ENCODE measurements at regions of chr7 and their contacts with region 1.

Region 1: GRCh38 chr7:44573464-44574286 is at the start of gene DDX56:
- DNase-seq: peak; percentile 83 to 97 (median 90)
- ATAC-seq: peak; percentile 96
- H3K4me3 ChIP-seq: peak within 1 kb of the TSS; percentile 71
- H3K4me3 Mint-ChIP-seq: peak within 1 kb of the TSS; percentile 95
- H3K27ac ChIP-seq: peak within 1 kb of the TSS; percentile 77 to 82
- H3K27ac Mint-ChIP-seq: peak within 1 kb of the TSS; percentile 99
- H3K4me1 ChIP-seq: peaks cover 35% of the 10 kb centered on the region
- H3K4me1 Mint-ChIP-seq: peaks cover 48% of the 10 kb centered on the region
- H3K27me3 ChIP-seq: no peaks in the 10 kb centered on the region
- H3K27me3 Mint-ChIP-seq: no peaks in the 10 kb centered on the region
- CTCF ChIP-seq: no peak
- total RNA-seq, gene DDX56: 126 to 127 TPM

Region 2: DNA sequence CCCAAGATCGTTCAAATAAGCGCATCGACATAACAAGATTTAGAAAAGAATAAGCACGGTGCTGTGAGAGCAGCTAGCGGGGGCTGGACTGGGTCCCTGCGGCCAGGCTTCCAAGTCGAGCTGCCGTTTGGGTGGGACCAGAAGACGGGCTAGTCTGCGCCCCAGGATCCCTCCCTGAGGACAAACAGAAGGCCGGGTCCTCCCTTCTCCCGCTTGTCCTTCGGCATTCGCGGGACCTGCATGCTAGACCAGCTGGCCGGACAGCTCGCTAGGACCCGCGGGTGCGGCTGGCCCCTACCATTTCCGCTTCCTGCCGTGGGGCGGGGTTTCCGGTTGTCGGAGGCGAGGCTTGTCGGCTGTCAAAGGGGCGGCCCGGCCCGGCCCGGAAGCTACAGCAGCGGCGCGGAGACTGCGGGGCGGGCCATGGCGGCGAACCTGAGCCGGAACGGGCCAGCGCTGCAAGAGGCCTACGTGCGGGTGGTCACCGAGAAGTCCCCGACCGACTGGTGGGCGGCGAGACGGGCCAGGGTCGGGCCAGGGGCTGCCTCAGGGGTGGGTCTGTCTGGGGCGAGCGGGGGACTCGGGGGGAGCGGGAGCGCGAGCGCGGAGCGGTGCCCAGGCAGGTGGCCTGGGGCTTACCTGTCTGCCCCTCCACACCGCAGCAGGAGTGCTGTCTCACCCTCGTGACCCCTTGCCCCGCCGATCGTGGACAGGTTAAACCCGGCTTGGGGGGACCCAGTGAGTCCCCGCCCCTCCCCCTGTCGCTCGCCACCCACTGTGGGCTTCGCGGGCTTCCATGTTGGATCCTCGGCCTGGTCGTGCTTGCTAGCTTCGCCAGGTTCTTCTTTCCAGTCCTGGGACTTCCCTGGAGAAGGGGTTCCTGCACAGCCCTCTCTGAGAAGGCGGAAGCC is 529.1 kb before region 1 on chr7 and contains the start of gene DBNL:
- CTCF ChIA-PET with region 1: interaction called, 3 read pairs
- POLR2A ChIA-PET with region 1: interaction called, 5 read pairs
- intact Hi-C with region 1: loop called in 1 of 2 experiments (anchors 10 kb)
- DNase-seq: peak; percentile 75 to 92 (median 88)
- ATAC-seq: peak; percentile 54
- H3K4me3 ChIP-seq: peak within 1 kb of the TSS; percentile 99
- H3K4me3 Mint-ChIP-seq: peak within 1 kb of the TSS; percentile 87
- H3K27ac ChIP-seq: peak within 1 kb of the TSS; percentile 89
- H3K27ac Mint-ChIP-seq: peak within 1 kb of the TSS; percentile 91
- H3K4me1 ChIP-seq: peaks cover 62% of the 10 kb centered on the region
- H3K4me1 Mint-ChIP-seq: peaks cover 50% of the 10 kb centered on the region
- H3K27me3 ChIP-seq: no peaks in the 10 kb centered on the region
- H3K27me3 Mint-ChIP-seq: no peaks in the 10 kb centered on the region
- CTCF ChIP-seq: no peak
- total RNA-seq, gene DBNL: 88.5 to 90.6 TPM

Measured in CD4-positive, alpha-beta T cell (primary cell).